Psoas muscle (tissue), 8 donors: ENCODE measurements at regions of chr3 and their contacts with region 1.

Region 1: GRCh38 chr3:133927540-133928066 is 31.9 kb upstream of the RAB6B start:
- DNase-seq: peak; percentile 73 to 76
- ATAC-seq: peak; percentile 75 to 94 (median 82)
- H3K4me3 ChIP-seq: peak overlapping the region; percentile 69
- H3K27ac ChIP-seq: no peak overlapping the region
- H3K4me1 ChIP-seq: peaks cover 5% of the 10 kb centered on the region
- H3K27me3 ChIP-seq: no peaks in the 10 kb centered on the region
- CTCF ChIP-seq: peak; percentile 89

Region 2: DNA sequence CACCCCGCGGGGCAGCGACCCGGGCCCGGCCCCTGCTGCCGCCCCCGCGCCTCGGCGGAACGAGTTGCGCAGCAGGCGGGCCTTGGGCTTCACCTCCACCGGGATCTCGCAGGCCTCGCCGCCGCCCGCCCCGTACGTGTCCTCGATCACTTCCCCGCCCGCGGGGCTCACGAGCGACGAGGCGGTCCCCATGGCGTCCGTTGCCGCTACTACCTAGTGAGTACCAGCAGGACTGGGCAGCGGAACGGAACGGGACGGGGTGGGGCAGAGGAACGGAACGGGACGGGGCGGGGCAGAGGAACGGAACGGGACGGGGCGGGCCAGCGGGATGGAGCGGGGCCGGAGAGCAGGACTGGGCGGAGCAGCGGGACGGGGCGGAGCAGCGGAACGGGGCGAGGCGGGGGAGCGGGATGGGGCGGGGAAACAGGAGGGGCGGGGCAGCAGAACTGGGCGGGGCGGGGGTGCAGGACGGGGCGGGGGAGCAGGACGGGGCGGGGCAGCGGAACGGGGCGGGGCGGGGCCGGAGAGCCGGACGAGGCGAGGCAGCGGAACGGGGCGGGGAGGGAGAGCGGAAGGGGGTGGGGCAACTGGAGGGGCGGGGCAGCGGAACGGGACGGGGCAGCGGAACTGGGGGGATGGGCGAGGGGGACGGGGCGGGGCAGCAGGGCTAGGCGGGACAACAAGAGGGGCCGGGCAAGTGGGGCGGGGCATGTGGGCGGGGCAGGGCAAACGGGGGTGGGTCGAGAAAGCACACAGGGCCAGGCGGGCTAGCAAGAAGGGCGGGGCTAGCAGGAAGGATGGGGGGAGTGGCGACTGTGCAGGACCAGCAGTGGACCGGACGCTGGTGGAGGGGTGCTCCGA is 1205.2 kb before region 1 on chr3 and contains the start of gene NPHP3:
- intact Hi-C with region 1: loop called (anchors 5 to 10 kb)
- DNase-seq: peak; percentile 98 to 99
- ATAC-seq: peak; percentile 88 to 93 (median 92)
- H3K4me3 ChIP-seq: peak within 1 kb of the TSS; percentile 79
- H3K27ac ChIP-seq: peak within 1 kb of the TSS; percentile 91
- H3K4me1 ChIP-seq: peaks cover 30% of the 10 kb centered on the region
- H3K27me3 ChIP-seq: no peaks in the 10 kb centered on the region
- CTCF ChIP-seq: no peak
- total RNA-seq, gene NPHP3: 6.9 to 9.1 (median 8.1) TPM

Region 3: DNA sequence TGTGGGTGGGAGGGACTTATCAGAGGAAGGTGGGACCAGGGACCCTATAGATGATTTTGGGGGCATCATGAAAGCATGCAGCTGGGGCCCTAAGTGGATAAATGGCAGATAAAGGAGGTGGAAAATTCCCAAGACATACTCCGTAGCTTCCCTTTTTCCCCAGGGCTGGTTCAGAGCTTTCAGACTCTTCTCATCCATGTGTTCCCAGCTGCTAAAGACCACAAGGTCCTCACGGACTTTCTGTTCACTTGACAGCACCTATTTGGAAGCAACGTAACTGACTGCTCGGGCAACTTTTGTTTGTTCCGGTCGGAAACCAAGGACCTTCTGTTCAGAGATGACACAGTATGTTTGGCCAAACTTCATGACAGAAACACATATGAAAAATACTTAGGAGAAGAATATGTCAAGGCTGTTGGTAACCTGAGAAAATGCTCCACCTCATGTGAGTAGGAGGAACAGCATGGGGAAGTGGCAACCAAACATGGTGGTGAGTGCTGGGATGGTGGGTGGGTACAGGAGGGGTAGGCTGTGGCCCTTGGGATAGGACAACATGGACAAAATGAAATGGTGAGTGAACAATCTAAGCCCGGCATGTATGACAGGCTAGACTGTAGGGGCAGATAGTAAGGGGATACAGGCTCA is 150.7 kb before region 1 on chr3:
- intact Hi-C with region 1: no loop called
- DNase-seq: no peak
- ATAC-seq: no peak
- H3K4me3 ChIP-seq: no peak overlapping the region
- H3K27ac ChIP-seq: no peak overlapping the region
- H3K4me1 ChIP-seq: no peaks in the 10 kb centered on the region
- H3K27me3 ChIP-seq: no peaks in the 10 kb centered on the region
- CTCF ChIP-seq: no peak

Region 4: GRCh38 chr3:133815386-133815785 is 112.2 kb before region 1 on chr3:
- intact Hi-C with region 1: loop called in 1 of 2 experiments (anchors 5 kb)
- DNase-seq: no peak
- ATAC-seq: no peak
- H3K4me3 ChIP-seq: no peak overlapping the region
- H3K27ac ChIP-seq: no peak overlapping the region
- H3K4me1 ChIP-seq: no peaks in the 10 kb centered on the region
- H3K27me3 ChIP-seq: no peaks in the 10 kb centered on the region
- CTCF ChIP-seq: no peak

Region 5: DNA sequence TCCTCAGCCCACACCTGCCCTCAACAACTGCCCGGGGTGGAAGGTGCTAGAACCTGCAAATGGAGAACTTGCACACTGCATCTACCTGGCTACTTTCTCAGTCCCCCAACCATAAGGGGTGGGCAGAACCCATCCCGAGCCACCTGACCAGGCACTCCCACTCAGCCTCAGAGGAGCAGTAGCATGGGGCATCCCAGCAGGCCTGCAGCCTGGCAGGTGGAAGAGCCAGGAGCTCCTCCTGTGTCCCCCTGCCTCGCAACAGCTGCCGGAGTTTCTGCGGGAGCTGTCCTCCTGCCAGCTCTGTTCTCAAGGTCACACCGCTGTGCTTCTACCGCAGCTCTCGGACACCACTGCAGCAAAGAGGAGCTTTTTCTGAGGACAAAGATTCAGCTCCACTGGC is 59.4 kb before region 1 on chr3:
- intact Hi-C with region 1: no loop called
- DNase-seq: no peak
- ATAC-seq: no peak
- H3K4me3 ChIP-seq: no peak overlapping the region
- H3K27ac ChIP-seq: no peak overlapping the region
- H3K4me1 ChIP-seq: no peaks in the 10 kb centered on the region
- H3K27me3 ChIP-seq: peaks cover 0 to 4% (median 0%) of the 10 kb centered on the region in 3 donors
- CTCF ChIP-seq: no peak

Region 6: DNA sequence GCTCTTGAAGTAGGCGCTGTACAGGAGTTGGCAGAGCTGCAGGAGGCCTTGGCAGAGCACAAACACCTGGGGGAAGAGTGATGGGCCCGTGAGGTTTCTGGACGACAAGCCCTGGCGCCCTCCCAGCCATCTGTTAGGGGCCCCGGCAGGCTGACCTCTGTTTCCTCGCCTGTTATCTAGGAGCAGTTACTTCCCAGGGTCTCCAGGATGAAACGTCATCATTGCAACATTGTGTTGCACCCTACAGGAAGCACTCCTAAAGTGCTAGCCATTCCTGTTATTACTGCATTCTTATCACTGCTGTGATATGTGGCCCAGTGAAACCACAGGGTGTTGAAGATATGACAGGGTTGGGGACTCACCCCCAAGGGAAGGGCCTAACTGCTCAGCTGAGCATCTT is 52.0 kb after region 1 on chr3:
- intact Hi-C with region 1: no loop called
- DNase-seq: no peak
- ATAC-seq: no peak
- H3K4me3 ChIP-seq: no peak overlapping the region
- H3K27ac ChIP-seq: no peak overlapping the region
- H3K4me1 ChIP-seq: no peaks in the 10 kb centered on the region
- H3K27me3 ChIP-seq: no peaks in the 10 kb centered on the region
- CTCF ChIP-seq: no peak

Region 7: DNA sequence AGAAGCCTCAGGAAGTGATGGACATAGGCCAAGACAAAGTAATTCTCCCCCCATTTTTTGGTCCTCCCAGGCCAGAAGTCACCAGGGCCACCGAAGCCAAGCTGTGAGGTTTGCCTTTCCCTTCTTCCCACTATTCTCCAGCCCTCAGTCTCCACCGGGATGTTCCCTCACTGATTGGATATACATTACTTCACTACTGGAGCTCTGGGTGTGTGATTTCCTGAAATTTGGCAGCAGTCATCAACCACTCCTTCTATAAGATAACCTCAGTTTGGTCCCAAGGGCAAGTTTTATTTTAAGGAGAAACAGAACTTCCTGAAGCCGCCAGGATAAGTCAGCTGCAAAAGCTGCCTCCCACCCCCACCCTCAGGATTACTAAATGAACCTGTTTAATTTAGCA is 90.8 kb after region 1 on chr3:
- intact Hi-C with region 1: no loop called
- DNase-seq: no peak
- ATAC-seq: no peak
- H3K4me3 ChIP-seq: no peak overlapping the region
- H3K27ac ChIP-seq: no peak overlapping the region
- H3K4me1 ChIP-seq: no peaks in the 10 kb centered on the region
- H3K27me3 ChIP-seq: no peaks in the 10 kb centered on the region
- CTCF ChIP-seq: no peak

Region 8: DNA sequence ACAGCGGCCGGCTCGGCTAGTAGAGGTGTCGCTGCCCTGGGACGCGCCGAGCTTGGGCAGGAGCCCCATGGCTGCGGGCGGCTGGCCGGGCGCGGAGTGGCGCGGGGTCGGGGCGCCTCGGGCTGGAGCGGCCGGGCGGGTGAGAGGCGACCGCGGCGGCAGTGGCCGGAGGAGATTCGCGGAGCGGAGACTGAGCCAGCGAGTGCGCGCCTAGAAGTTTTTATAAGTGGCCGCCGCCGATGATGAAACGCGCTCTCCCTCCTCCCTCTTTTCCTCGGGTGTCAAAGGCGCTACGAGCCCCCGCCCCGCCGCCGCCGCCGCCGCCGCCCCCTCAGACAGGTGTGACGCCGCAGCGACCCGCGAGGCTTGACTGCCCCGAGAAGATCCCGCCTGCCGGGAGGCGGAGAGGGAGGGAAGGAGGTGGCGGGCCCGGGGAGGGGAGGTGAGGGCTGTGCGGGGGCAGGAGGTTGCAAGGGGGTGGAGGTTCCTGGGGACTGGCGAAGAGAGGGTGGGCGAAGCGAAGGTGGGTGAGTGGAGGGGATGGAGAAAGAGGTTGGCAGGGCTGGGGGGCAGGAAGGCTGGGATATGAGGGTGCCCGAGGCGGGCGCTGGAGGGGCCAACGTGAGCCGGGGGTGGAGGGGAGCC is 102.3 kb after region 1 on chr3 and contains the start of gene SLCO2A1:
- intact Hi-C with region 1: loop called in 1 of 2 experiments (anchors 10 kb)
- DNase-seq: peak in 1 of 2 donors; percentile 21
- ATAC-seq: peak; percentile 51 to 67 (median 60)
- H3K4me3 ChIP-seq: peak within 1 kb of the TSS; percentile 66
- H3K27ac ChIP-seq: no peak within 1 kb of the TSS
- H3K4me1 ChIP-seq: no peaks in the 10 kb centered on the region
- H3K27me3 ChIP-seq: peaks cover 0 to 28% (median 3%) of the 10 kb centered on the region in 3 donors
- CTCF ChIP-seq: no peak
- total RNA-seq, gene SLCO2A1: 3.7 to 5.2 (median 4.4) TPM

Region 9: GRCh38 chr3:134212906-134213665 is 285.5 kb after region 1 on chr3:
- intact Hi-C with region 1: loop called in 1 of 2 experiments (anchors 10 kb)
- DNase-seq: peak; percentile 76 to 85
- ATAC-seq: peak; percentile 85 to 91 (median 89)
- H3K4me3 ChIP-seq: no peak overlapping the region
- H3K27ac ChIP-seq: no peak overlapping the region
- H3K4me1 ChIP-seq: peaks cover 9% of the 10 kb centered on the region
- H3K27me3 ChIP-seq: no peaks in the 10 kb centered on the region
- CTCF ChIP-seq: peak; percentile 98